ENCODE measurements at regions of chrX and their contacts with region 1.

Region 1: GRCh38 chrX:15500497-15500966 is at the start of gene BMX:
- DNase-seq: peak; percentile 76
- total RNA-seq, gene BMX: 1.8 TPM

Region 2: GRCh38 chrX:15055146-15055930 is 445.2 kb before region 1 on chrX:
- intact Hi-C with region 1: no loop called
- DNase-seq: no peak

Region 3: DNA sequence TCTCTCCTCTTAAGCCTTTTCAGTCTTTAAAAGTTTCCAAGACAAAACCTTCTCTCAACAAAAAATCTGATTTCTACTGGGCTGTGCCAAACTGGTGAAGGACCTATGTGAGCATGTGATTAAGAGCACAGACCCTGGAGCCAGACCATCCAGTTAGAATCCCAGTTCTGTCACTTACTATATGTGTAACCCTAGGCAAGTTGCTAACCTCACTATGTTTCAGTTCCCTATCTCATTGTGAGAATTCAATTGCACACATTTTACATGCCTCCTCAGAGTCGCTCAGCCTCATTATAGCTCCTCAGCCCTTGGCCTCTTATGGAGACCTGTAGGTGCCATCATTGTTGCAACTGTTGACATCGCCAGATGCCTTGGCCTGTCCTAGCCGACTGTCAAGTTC is 62.2 kb before region 1 on chrX:
- intact Hi-C with region 1: no loop called
- DNase-seq: no peak

Region 4: GRCh38 chrX:15564981-15565579 is 64.5 kb after region 1 on chrX:
- intact Hi-C with region 1: loop called (anchors 2 kb)
- DNase-seq: no peak